ENCODE measurements at regions of chr14 and their contacts with region 1.

Region 1: GRCh38 chr14:66507722-66508546 is at the start of gene GPHN:
- DNase-seq: peak; percentile 96 to 98
- ATAC-seq: peak; percentile 88 to 90
- H3K4me3 ChIP-seq: peak within 1 kb of the TSS; percentile 87 to 96 (median 92)
- H3K27ac ChIP-seq: peak within 1 kb of the TSS; percentile 95 to 100 (median 96)
- H3K4me1 ChIP-seq: peaks cover 40 to 41% of the 10 kb centered on the region in 2 donors
- H3K27me3 ChIP-seq: no peaks in the 10 kb centered on the region
- CTCF ChIP-seq: peak in 3 of 5 experiments; percentile 18 to 53 (median 49)
- POLR2A ChIP-seq: peak; percentile 87 to 95
- total RNA-seq, gene GPHN: 10.3 to 33.3 (median 23.5) TPM

Region 2: GRCh38 chr14:66395300-66395699 is 112.6 kb before region 1 on chr14:
- in situ Hi-C with region 1: no loop called
- intact Hi-C with region 1: loop called (anchors 5 kb)
- DNase-seq: no peak
- ATAC-seq: no peak
- H3K4me3 ChIP-seq: no peak overlapping the region
- H3K27ac ChIP-seq: no peak overlapping the region
- H3K4me1 ChIP-seq: peaks cover 0 to 6% of the 10 kb centered on the region in 2 donors
- H3K27me3 ChIP-seq: no peaks in the 10 kb centered on the region
- CTCF ChIP-seq: no peak
- POLR2A ChIP-seq: no peak

Region 3: GRCh38 chr14:66649498-66649897 is 141.6 kb after region 1 on chr14:
- in situ Hi-C with region 1: no loop called
- intact Hi-C with region 1: loop called (anchors 10 kb)
- DNase-seq: no peak
- ATAC-seq: no peak
- H3K4me3 ChIP-seq: no peak overlapping the region
- H3K27ac ChIP-seq: no peak overlapping the region
- H3K4me1 ChIP-seq: peaks cover 16 to 21% of the 10 kb centered on the region in 2 donors
- H3K27me3 ChIP-seq: no peaks in the 10 kb centered on the region
- CTCF ChIP-seq: no peak
- POLR2A ChIP-seq: no peak

Region 4: GRCh38 chr14:66746316-66747006 is 238.5 kb after region 1 on chr14:
- in situ Hi-C with region 1: no loop called
- intact Hi-C with region 1: loop called (anchors 5 kb)
- DNase-seq: no peak
- ATAC-seq: peak in 1 of 2 donors; percentile 53
- H3K4me3 ChIP-seq: no peak overlapping the region
- H3K27ac ChIP-seq: no peak overlapping the region
- H3K4me1 ChIP-seq: peaks cover 19 to 21% of the 10 kb centered on the region in 2 donors
- H3K27me3 ChIP-seq: no peaks in the 10 kb centered on the region
- CTCF ChIP-seq: peak; percentile 33 to 62 (median 41)
- POLR2A ChIP-seq: no peak

Region 5: GRCh38 chr14:67240978-67241414 is 733.1 kb after region 1 on chr14:
- in situ Hi-C with region 1: no loop called
- intact Hi-C with region 1: loop called (anchors 1 kb)
- DNase-seq: peak; percentile 95 to 98
- ATAC-seq: peak; percentile 86 to 88
- H3K4me3 ChIP-seq: peak overlapping the region; percentile 85 to 95 (median 92)
- H3K27ac ChIP-seq: peak overlapping the region; percentile 94 to 99 (median 96)
- H3K4me1 ChIP-seq: peaks cover 8 to 22% of the 10 kb centered on the region in 2 donors
- H3K27me3 ChIP-seq: no peaks in the 10 kb centered on the region
- CTCF ChIP-seq: no peak
- POLR2A ChIP-seq: peak; percentile 86 to 88

Region 6: GRCh38 chr14:67359775-67360648 is 852.1 kb after region 1 on chr14 and contains the starts of genes ATP6V1D and EIF2S1:
- in situ Hi-C with region 1: no loop called
- intact Hi-C with region 1: loop called (anchors 5 kb)
- DNase-seq: peak; percentile 99
- ATAC-seq: peak; percentile 94 to 96
- H3K4me3 ChIP-seq: peak within 1 kb of the TSS; percentile 72 to 99 (median 94)
- H3K27ac ChIP-seq: peak within 1 kb of the TSS; percentile 95 to 98 (median 98)
- H3K4me1 ChIP-seq: peaks cover 48 to 51% of the 10 kb centered on the region in 2 donors
- H3K27me3 ChIP-seq: no peaks in the 10 kb centered on the region
- CTCF ChIP-seq: peak; percentile 79 to 100 (median 95)
- POLR2A ChIP-seq: peak; percentile 62 to 90
- total RNA-seq, gene ATP6V1D: 69.8 to 126 (median 73.3) TPM
- total RNA-seq, gene EIF2S1: 87.7 to 164 (median 129) TPM